ENCODE measurements at regions of chr1 and their contacts with region 1.

Region 1: GRCh38 chr1:67138813-67139499 is 4.2 kb upstream of the C1orf141 start:
- DNase-seq: peak; percentile 16
- ATAC-seq: peak; percentile 94
- H3K4me3 ChIP-seq: peak overlapping the region in 2 of 3 experiments; percentile 10 to 31; a peak in 2 of 6 replicates
- H3K27ac ChIP-seq: no peak overlapping the region
- H3K4me1 ChIP-seq: peaks cover 19% of the 10 kb centered on the region
- H3K27me3 ChIP-seq: no peaks in the 10 kb centered on the region
- CTCF ChIP-seq: no peak
- EP300 ChIP-seq: no peak
- POLR2A ChIP-seq: no peak
- RAD21 ChIP-seq: no peak

Region 2: DNA sequence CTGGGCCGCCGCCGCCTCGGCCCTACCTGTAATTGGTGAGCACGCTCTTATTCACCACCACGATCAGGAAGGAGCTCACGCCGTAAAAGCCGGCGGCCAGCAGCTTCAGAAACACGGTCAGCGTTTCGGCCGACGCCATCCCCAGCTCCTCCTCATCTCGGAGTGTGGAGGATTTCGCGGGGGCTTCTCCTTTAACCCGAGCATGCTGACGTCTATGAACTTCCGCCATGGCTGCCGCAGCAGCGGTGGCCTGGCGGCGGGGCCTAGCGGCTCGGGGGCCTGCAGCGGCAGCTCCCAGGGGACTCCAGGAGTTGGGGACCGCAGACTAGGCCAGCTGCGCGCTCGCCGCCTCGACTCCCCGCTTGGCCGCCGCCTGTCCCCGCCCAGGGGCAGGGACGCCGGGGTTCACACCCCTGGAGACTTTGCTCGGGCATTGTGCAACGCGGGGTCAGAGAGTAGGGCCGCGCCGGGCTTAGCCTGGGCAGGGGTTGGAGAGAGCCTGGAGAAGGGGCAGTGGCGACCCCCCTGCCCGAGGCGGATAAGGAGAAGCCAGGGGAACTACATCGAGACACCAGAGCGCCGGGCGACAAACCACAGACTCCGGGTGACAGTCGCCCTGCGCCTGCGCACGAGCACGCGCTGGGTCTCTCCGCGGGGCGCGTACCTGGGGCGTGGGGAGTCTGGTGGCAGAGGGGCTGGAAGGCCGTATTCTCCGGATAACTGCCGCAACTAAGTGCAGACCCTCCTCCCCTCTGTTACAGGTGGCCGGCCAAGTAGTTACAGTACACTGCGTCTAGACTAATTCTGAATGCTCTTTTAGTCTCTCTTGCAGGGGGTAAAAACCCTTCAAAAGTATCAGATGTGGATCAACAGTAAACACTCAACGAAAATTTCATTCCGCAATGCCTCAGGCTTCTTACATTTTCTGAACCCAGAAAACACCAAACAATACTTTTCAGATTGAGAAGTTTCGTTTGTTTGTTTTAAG is 84.9 kb before region 1 on chr1 and contains the start of gene SLC35D1:
- CTCF ChIA-PET with region 1: no interaction called
- POLR2A ChIA-PET with region 1: no interaction called
- in situ Hi-C with region 1: no loop called
- intact Hi-C with region 1: loop called (anchors 2 kb)
- DNase-seq: peak; percentile 86
- ATAC-seq: peak; percentile 90
- H3K4me3 ChIP-seq: peak within 1 kb of the TSS; percentile 85 to 96 (median 88)
- H3K27ac ChIP-seq: peak within 1 kb of the TSS; percentile 98
- H3K4me1 ChIP-seq: peaks cover 42% of the 10 kb centered on the region
- H3K27me3 ChIP-seq: no peaks in the 10 kb centered on the region; a peak in 1 of 5 replicates
- CTCF ChIP-seq: peak; percentile 40
- EP300 ChIP-seq: peak in 1 of 2 experiments; percentile 61; a peak in 1 of 4 replicates
- POLR2A ChIP-seq: peak; percentile 66 to 76
- RAD21 ChIP-seq: peak; percentile 30; the same call in 1 of the 2 replicates
- total RNA-seq, gene SLC35D1: 30.6 and 41.5 TPM in 2 replicates

Region 3: GRCh38 chr1:67077593-67077992 is 61.4 kb before region 1 on chr1:
- CTCF ChIA-PET with region 1: no interaction called
- POLR2A ChIA-PET with region 1: no interaction called
- in situ Hi-C with region 1: no loop called
- intact Hi-C with region 1: no loop called
- DNase-seq: no peak
- ATAC-seq: no peak
- H3K4me3 ChIP-seq: no peak overlapping the region
- H3K27ac ChIP-seq: no peak overlapping the region
- H3K4me1 ChIP-seq: no peaks in the 10 kb centered on the region
- H3K27me3 ChIP-seq: 0 out of 5 replicates have a peak, but pooled peaks cover 0 to 1% of the 10 kb centered on the region in 2 experiments
- CTCF ChIP-seq: no peak
- EP300 ChIP-seq: no peak
- POLR2A ChIP-seq: no peak
- RAD21 ChIP-seq: no peak

Region 4: DNA sequence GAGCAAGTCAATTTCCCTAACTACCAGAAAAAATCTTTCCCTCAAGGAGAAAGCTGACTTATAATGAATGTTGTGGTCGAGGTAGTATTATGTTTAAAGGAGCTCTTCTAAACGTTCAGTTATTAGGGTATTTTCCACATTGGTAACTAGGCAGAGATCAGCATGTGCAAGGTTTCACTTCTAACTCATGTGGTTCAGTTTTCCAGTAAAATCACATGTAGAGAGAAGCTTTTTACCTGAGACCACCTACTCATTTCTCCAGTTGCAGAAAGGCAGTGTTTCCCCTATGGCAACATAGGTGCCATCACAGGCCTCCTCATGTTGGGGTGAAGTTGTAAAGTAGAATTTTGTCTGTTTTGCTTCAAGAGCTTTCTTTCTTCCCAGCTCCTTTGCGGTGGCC is 51.0 kb after region 1 on chr1:
- CTCF ChIA-PET with region 1: no interaction called
- POLR2A ChIA-PET with region 1: no interaction called
- in situ Hi-C with region 1: no loop called
- intact Hi-C with region 1: no loop called
- DNase-seq: no peak
- ATAC-seq: no peak
- H3K4me3 ChIP-seq: no peak overlapping the region
- H3K27ac ChIP-seq: no peak overlapping the region
- H3K4me1 ChIP-seq: peaks cover 6% of the 10 kb centered on the region; the same call in 1 of the 2 replicates
- H3K27me3 ChIP-seq: no peaks in the 10 kb centered on the region
- CTCF ChIP-seq: no peak
- EP300 ChIP-seq: no peak
- POLR2A ChIP-seq: no peak
- RAD21 ChIP-seq: no peak